Upper lobe of right lung (tissue), 1 donor: ENCODE measurements at regions of chr17 and their contacts with region 1.

Region 1: GRCh38 chr17:82030470-82031302 is 792 bp upstream of the RAC3 start:
- DNase-seq: peak; percentile 93
- ATAC-seq: peak; percentile 91
- H3K4me3 ChIP-seq: peak overlapping the region; percentile 56
- H3K27ac ChIP-seq: no peak overlapping the region
- H3K4me1 ChIP-seq: peaks cover 9% of the 10 kb centered on the region
- H3K27me3 ChIP-seq: no peaks in the 10 kb centered on the region
- CTCF ChIP-seq: peak; percentile 96

Region 2: DNA sequence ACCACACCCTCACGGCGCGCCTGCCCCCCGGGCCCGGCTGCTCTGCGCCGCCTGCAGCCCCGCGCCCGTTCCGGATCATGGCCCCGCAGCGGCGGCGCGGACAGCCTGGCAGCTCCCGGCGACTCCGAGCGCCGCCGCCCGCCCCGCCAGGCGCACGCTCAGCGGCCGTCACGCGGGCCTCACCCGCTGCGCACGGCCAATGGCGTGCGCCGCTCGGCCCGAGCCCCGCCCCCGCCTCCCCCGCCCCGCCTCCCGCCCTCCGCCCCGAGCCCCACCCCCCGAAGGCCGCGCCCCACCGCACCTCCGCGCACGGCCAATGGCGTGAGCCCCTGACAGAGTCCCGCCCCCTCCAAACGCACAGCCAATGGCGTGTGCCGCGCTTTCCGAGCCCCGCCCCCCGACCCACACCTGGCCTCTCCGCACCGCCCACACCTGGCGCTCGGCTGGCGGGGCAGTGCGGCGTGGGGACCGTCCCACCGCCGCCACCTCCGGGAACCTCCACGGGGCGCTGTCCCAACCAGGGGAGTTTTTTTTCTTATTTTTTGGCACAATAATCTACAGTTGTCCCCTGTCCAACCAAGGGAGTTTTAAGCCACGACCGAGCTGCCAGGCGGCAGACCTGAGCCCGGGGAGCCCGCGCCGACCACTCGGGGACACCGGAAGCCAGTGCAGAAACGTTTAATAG is 119.3 kb before region 1 on chr17 and contains the start of gene PCYT2:
- intact Hi-C with region 1: no loop called
- DNase-seq: peak; percentile 97
- ATAC-seq: peak; percentile 96
- H3K4me3 ChIP-seq: peak within 1 kb of the TSS; percentile 85
- H3K27ac ChIP-seq: peak within 1 kb of the TSS; percentile 60
- H3K4me1 ChIP-seq: peaks cover 14% of the 10 kb centered on the region
- H3K27me3 ChIP-seq: no peaks in the 10 kb centered on the region
- CTCF ChIP-seq: peak; percentile 28
- total RNA-seq, gene PCYT2: 46.1 TPM

Region 3: DNA sequence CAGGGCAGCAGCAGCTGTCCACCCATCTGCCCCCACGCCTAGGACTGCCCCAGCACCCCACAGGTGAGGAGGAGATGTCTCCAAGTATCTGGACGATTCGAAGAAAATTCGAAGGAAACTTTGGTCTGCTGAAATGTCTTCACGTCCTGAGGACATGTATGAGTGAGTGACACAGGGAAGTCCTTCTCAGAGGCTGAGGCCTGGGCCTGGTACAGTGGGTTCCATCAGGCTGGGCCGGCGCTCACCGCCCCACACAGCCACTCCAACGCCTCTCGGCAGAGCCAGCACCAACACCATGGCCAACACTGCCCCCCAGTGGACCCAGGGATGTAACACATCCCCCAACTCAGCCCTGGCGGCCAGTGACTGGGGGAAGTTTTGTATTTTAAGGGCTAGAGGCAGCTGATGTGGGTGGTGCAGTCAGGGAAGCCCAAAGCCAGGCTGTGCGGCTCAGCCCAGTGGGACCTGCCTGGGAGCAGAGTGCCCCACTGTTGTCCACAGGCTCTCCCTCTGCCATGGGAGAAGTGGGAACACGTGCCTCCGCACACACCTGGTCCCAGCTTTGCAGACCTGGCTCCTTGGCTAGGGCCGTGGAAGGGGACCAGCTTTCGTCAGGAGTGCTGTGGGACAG is 123.2 kb after region 1 on chr17:
- intact Hi-C with region 1: loop called (anchors 5 kb)
- DNase-seq: peak; percentile 92
- ATAC-seq: peak; percentile 96
- H3K4me3 ChIP-seq: no peak overlapping the region
- H3K27ac ChIP-seq: no peak overlapping the region
- H3K4me1 ChIP-seq: no peaks in the 10 kb centered on the region
- H3K27me3 ChIP-seq: no peaks in the 10 kb centered on the region
- CTCF ChIP-seq: peak; percentile 92